Activated naive CD4-positive, alpha-beta T cell treated with anti-CD3 and anti-CD28 coated beads for 36 hours (primary cell): ENCODE measurements at regions of chr12 and their contacts with region 1.

Region 1: GRCh38 chr12:39692258-39692853 is 72.8 kb upstream of the ABCD2 start:
- DNase-seq: no peak
- H3K4me3 Mint-ChIP-seq: no peak overlapping the region
- H3K27ac Mint-ChIP-seq: no peak overlapping the region
- H3K4me1 Mint-ChIP-seq: peaks cover 1% of the 10 kb centered on the region
- H3K27me3 Mint-ChIP-seq: no peaks in the 10 kb centered on the region

Region 2: DNA sequence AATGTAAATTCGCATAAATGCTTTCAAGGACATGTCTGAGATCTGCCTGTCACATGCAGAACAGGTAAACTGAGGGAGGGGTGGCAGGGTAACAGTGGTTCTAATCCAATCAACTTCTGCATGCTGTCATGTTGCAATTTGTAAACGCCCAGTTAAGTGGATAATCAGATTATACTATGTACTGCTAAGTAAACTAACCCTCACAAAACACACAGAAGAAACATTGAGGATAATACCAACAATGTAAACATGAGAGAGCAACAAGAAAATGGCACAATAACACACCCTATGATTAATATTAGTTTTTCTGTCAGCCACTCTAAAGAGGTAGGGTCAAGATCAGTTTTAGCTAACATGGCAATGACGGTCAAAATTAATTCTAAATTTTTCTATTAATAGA is 373.2 kb before region 1 on chr12:
- CTCF ChIA-PET with region 1: interaction called, 4 read pairs
- intact Hi-C with region 1: loop called (anchors 1 kb)
- DNase-seq: no peak
- H3K4me3 Mint-ChIP-seq: no peak overlapping the region
- H3K27ac Mint-ChIP-seq: no peak overlapping the region
- H3K4me1 Mint-ChIP-seq: no peaks in the 10 kb centered on the region
- H3K27me3 Mint-ChIP-seq: no peaks in the 10 kb centered on the region

Region 3: GRCh38 chr12:39365364-39366001 is 326.9 kb before region 1 on chr12:
- CTCF ChIA-PET with region 1: interaction called, 3 read pairs
- intact Hi-C with region 1: loop called (anchors 1 kb)
- DNase-seq: no peak
- H3K4me3 Mint-ChIP-seq: no peak overlapping the region
- H3K27ac Mint-ChIP-seq: no peak overlapping the region
- H3K4me1 Mint-ChIP-seq: no peaks in the 10 kb centered on the region
- H3K27me3 Mint-ChIP-seq: no peaks in the 10 kb centered on the region

Region 4: GRCh38 chr12:39587225-39587624 is 105.1 kb before region 1 on chr12:
- CTCF ChIA-PET with region 1: interaction called, 5 read pairs
- intact Hi-C with region 1: loop called (anchors 1 kb)
- DNase-seq: peak; percentile 38
- H3K4me3 Mint-ChIP-seq: no peak overlapping the region
- H3K27ac Mint-ChIP-seq: no peak overlapping the region
- H3K4me1 Mint-ChIP-seq: peaks cover 12% of the 10 kb centered on the region
- H3K27me3 Mint-ChIP-seq: no peaks in the 10 kb centered on the region

Region 5: GRCh38 chr12:39835517-39836489 is 143.4 kb after region 1 on chr12:
- CTCF ChIA-PET with region 1: no interaction called
- intact Hi-C with region 1: no loop called
- DNase-seq: no peak
- H3K4me3 Mint-ChIP-seq: no peak overlapping the region
- H3K27ac Mint-ChIP-seq: no peak overlapping the region
- H3K4me1 Mint-ChIP-seq: no peaks in the 10 kb centered on the region
- H3K27me3 Mint-ChIP-seq: no peaks in the 10 kb centered on the region